Psoas muscle (tissue), 8 donors: ENCODE measurements at regions of chr1 and their contacts with region 1.

Region 1: GRCh38 chr1:110312188-110313121 is 26.7 kb upstream of the RBM15 start:
- DNase-seq: peak; percentile 78 to 89
- ATAC-seq: peak; percentile 98 to 100 (median 99)
- H3K4me3 ChIP-seq: no peak overlapping the region
- H3K27ac ChIP-seq: no peak overlapping the region
- H3K4me1 ChIP-seq: no peaks in the 10 kb centered on the region
- H3K27me3 ChIP-seq: no peaks in the 10 kb centered on the region
- CTCF ChIP-seq: peak; percentile 97

Region 2: DNA sequence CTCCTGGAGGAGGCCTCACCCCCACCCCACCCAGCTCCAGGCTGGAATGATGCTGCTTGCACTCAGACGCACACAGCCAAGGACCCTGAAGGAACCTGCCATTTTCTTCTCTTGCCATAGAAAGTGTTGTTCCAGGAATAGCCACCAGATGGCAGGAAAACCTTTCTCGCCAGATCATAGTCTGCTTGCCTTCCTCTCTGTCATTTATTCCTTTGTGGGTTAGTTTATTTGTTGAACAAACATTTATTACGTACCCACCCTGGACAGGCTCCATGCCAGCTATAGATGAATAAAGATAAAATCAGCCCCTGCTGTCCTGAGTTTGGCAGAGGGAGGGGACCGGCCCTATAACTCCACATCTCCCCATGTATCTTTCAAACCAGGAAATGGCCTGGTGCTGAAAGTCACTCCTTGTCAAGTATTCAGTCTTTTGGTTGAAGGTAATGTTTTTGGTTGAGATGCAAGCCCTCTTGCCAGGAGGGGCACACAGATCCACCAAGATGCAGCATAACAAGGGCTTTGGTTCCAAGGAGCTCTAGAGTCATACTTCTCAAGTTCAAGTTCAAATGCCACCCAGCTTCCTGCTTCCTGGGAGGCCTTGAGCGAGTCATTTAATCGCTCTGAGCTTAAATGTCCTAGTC is 109.3 kb before region 1 on chr1:
- intact Hi-C with region 1: loop called (anchors 1 to 2 kb)
- DNase-seq: no peak
- ATAC-seq: peak; percentile 58 to 83 (median 68)
- H3K4me3 ChIP-seq: no peak overlapping the region
- H3K27ac ChIP-seq: no peak overlapping the region
- H3K4me1 ChIP-seq: no peaks in the 10 kb centered on the region
- H3K27me3 ChIP-seq: no peaks in the 10 kb centered on the region
- CTCF ChIP-seq: peak; percentile 89

Region 3: GRCh38 chr1:110209715-110210603 is 102.5 kb before region 1 on chr1 and contains the start of gene KCNC4:
- intact Hi-C with region 1: loop called (anchors 1 to 2 kb)
- DNase-seq: peak; percentile 91 to 93
- ATAC-seq: peak; percentile 78 to 87 (median 84)
- H3K4me3 ChIP-seq: peak within 1 kb of the TSS; percentile 72
- H3K27ac ChIP-seq: peak within 1 kb of the TSS; percentile 67
- H3K4me1 ChIP-seq: no peaks in the 10 kb centered on the region
- H3K27me3 ChIP-seq: peaks cover 0 to 18% (median 3%) of the 10 kb centered on the region in 3 donors
- CTCF ChIP-seq: no peak
- total RNA-seq, gene KCNC4: 5.1 to 14.5 (median 5.9) TPM

Region 4: DNA sequence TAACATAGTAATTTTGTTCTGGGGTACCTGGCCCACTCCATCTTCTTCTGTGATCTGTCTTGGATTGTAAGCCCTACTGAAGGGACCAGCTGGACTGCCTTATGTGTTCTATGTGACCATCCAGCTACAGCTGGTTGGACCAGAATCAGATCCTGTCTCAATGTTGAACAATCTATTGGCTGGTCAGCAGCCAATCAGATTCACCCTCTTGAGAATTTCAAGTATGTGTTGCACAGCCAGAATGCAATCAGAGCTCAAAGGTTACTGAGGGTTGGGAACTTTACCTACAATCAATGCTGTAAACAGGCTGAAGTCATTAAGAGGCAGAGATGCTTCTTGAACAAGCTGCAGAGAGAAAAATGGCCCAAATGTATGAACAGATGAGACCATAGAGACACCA is 40.4 kb before region 1 on chr1:
- intact Hi-C with region 1: no loop called
- DNase-seq: no peak
- ATAC-seq: no peak
- H3K4me3 ChIP-seq: no peak overlapping the region
- H3K27ac ChIP-seq: no peak overlapping the region
- H3K4me1 ChIP-seq: no peaks in the 10 kb centered on the region
- H3K27me3 ChIP-seq: peaks cover 0 to 3% (median 0%) of the 10 kb centered on the region in 3 donors
- CTCF ChIP-seq: no peak

Region 5: GRCh38 chr1:110460253-110461220 is 148.1 kb after region 1 on chr1:
- intact Hi-C with region 1: loop called (anchors 5 to 10 kb)
- DNase-seq: peak; percentile 64 to 78
- ATAC-seq: peak; percentile 89 to 96 (median 93)
- H3K4me3 ChIP-seq: no peak overlapping the region
- H3K27ac ChIP-seq: no peak overlapping the region
- H3K4me1 ChIP-seq: no peaks in the 10 kb centered on the region
- H3K27me3 ChIP-seq: no peaks in the 10 kb centered on the region
- CTCF ChIP-seq: peak; percentile 98